Psoas muscle (tissue), 8 donors: ENCODE measurements at regions of chr7 and their contacts with region 1.

Region 1: DNA sequence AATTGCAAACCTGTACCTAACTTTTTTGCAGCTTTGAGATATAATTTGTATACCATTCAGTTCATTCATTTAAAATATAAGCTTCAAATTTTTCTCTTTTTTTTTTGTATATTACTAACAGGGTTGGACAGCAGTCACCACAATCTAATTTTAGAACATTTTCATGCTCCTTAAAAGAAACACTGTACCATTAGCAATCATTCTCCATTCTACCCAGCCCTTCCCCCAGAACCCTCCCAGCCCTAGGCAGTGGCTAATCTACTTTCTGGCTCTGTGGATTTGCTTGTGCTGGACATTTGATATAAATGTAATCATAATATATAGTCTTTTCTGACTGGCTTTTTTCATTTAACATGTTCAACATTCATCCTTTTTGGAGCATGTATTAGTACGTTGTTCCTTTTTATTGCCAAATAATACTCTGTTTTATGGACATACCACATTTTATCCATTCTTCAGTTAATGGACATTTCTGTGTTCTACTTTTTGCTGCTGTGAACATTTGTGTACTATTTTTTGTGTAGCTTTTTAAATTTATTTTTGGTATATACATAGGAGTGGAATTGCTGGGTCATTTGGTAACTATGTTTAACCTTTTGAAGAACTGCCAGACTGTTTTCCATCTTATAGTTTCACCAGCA is 40.9 kb upstream of the ST7 start:
- DNase-seq: no peak
- ATAC-seq: peak in 3 of 4 donors; percentile 52 to 68 (median 65)
- H3K4me3 ChIP-seq: no peak overlapping the region
- H3K27ac ChIP-seq: peak overlapping the region; percentile 53
- H3K4me1 ChIP-seq: peaks cover 26% of the 10 kb centered on the region
- H3K27me3 ChIP-seq: no peaks in the 10 kb centered on the region
- CTCF ChIP-seq: no peak

Region 2: GRCh38 chr7:116610210-116610609 is 302.2 kb before region 1 on chr7:
- intact Hi-C with region 1: no loop called
- DNase-seq: no peak
- ATAC-seq: no peak
- H3K4me3 ChIP-seq: no peak overlapping the region
- H3K27ac ChIP-seq: no peak overlapping the region
- H3K4me1 ChIP-seq: no peaks in the 10 kb centered on the region
- H3K27me3 ChIP-seq: no peaks in the 10 kb centered on the region
- CTCF ChIP-seq: no peak

Region 3: DNA sequence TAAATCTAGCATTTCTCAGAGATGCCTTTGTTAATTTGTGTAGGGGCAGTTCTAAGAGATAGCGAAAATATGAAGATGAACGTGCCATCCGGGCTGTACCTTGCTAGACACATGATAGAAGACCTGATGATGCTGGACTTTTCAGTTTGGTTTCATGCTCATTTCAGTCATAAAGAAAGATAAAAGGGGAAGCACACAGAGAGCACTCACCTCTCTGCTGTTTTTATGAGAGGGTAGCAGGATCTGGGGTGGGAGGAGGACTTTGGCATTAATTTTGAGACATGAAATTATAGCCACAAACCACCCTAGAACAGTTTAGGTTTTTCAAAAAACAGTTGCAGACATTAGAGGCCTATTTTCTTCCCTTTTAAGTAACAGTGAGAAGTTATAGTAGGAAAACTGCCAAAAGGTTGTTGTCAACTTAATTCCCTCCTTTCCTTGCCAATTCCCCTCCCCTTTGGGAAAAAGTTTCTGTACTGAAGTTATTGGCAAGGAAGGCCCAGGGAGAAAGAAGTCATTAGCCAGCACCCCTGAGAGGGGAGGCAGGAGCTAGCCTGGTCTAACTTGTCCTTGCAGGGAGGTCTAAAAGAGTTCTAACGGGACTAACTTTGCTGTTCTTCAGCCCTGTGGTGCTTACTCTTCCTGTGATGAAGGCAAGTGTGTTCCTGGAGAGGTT is 43.5 kb after region 1 on chr7:
- intact Hi-C with region 1: loop called in 1 of 2 experiments (anchors 1 kb)
- DNase-seq: no peak
- ATAC-seq: no peak
- H3K4me3 ChIP-seq: peak overlapping the region; percentile 17
- H3K27ac ChIP-seq: peak overlapping the region; percentile 100
- H3K4me1 ChIP-seq: peaks cover 30% of the 10 kb centered on the region
- H3K27me3 ChIP-seq: no peaks in the 10 kb centered on the region
- CTCF ChIP-seq: no peak